ENCODE measurements at regions of chr4 and their contacts with region 1.

Region 1: DNA sequence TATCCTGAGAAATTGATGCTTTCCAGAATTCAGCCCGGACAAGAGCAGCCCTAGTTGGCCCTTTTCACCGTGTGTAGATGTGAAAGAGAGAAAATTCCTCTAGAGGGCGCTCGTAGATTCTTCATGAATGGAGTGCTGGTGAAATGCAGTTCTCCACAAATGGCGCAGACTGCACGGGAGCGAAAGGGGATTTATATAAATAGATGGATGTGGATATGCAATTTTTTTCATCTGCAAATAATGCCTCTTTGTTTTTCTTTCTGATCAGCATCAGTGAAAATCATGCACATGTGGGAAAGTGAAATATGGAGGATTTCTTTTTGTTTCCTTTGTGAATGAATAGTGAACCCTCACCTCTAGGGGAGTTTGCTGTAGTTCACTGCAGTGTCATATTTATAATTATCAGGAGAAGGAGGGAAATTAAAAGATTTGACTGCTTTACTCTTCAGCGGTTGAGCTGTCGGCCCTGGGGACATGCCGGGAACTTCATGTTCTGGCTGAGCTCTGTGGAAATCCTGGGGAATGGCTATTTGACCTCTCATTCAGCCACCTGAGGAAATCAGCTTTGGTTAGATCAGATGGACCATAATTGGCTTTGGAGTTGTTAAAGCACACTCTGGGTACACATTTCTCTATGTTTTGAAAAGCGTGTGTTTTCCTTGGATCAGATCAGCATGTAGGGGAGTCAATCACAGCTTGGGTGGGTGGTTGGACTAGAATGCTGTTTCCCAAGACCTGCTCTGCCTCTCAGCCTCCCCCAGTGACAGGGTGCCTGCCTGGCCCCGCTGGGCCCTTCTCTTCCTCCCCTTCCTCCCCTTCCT is 115.0 kb upstream of the SHISA3 start:
- DNase-seq: peak; percentile 52
- ATAC-seq: peak; percentile 88 to 93

Region 2: GRCh38 chr4:42519803-42520417 is 237.6 kb after region 1 on chr4:
- intact Hi-C with region 1: loop called (anchors 2 to 10 kb)
- DNase-seq: no peak
- ATAC-seq: peak; percentile 35 to 58

Region 3: DNA sequence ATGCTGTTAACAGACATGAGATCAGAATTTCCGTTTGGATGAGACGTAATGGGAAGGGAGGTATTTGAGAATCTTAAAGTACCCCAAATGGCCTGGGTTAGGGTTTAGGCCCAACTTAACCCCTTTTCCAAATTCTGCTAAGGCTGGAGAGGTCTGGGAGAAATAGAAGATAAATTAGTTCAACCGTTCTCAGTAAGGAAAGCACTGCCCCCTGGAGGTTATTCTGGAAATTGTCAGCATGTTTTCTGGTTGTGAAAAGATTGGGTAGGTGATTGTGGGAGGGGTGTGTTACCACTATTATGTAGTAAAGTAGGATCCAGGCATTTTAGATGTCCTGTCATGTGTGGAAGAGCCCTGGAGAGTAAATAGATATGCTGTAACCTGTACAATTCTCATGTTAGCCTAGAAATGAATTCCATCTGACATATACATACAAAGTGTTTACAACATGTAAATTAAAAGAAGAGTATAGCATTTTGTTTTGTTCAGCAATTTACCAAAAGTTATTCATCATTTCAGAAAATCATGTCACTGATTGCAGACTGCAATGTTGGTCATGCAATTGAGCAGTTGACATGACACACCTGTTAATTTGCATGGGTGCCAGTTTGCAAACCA is 583.4 kb after region 1 on chr4:
- intact Hi-C with region 1: loop called in 1 of 2 experiments (anchors 5 kb)
- DNase-seq: no peak
- ATAC-seq: peak in 1 of 2 donors; percentile 51